Astrocyte of the cerebellum (primary cell): ENCODE measurements at regions of chr16 and their contacts with region 1.

Region 1: DNA sequence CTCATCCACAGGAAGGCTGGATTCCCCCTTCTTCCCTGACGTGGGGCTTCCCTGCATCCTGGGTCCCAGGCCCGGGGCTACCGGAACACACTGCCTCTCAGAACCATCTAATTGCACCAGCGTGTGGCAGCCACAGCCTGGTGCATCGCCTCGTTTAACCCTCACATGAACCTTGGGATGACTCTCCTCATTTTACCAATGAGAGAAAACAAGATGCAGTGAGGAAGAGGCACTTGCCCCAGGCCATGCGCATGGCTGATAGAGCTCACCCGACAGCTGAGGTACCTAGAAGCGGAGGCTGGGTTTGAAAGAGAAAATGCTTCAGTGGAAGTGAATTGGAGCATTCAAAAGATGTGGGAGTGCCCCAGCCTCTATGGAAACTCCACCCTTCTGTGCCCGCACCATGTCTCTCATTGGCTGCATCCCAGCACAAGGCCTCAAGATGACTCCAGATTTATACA is 162.3 kb downstream of the KATNIP start:
- DNase-seq: no peak
- H3K4me3 ChIP-seq: no peak overlapping the region
- CTCF ChIP-seq: no peak

Region 2: DNA sequence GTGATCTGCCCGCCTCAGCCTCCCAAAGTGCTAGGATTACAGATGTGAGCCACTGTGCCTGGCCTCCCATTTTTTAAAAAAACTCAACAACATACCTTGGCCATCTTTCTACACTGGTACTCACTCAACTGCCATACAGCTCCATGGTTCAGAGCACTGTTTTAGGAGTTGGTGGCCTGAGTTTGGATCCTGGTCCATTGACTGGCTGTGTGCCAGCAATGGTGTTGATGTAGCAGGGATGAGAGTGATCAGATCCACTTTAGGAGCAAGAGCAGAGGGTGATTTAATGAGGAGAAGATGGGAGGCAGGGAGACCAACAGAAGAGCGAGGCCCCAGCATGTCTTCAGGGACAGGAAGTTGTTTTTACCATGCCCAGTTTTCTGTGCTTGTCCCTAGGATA is 58.1 kb before region 1 on chr16:
- in situ Hi-C with region 1: no loop called
- DNase-seq: no peak
- H3K4me3 ChIP-seq: no peak overlapping the region
- CTCF ChIP-seq: no peak

Region 3: GRCh38 chr16:27665881-27666280 is 46.4 kb before region 1 on chr16:
- in situ Hi-C with region 1: loop called (anchors 5 kb)
- DNase-seq: no peak
- H3K4me3 ChIP-seq: no peak overlapping the region
- CTCF ChIP-seq: no peak